Mammary epithelial cell (primary cell): ENCODE measurements at regions of chr2 and their contacts with region 1.

Region 1: DNA sequence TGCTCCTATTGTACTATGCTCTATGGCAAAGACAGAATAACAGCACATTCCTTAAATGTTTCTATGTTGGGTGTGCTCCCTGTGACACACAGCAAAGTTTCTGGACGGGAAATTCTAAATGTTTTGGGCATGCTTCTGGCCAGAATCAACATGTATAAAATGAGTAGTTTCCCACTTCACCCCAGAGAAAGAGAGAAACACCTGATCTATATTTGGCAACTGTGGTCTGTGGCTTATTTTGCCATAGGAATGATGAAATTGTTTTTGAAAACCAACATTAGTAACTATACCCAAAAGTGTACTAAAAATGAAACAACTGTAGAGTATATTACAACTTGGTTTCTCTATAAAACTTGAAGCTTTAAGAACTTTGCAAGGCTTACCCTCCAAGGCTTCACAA is 89.1 kb downstream of the RAD51AP2 start:
- DNase-seq: peak; percentile 95
- H3K4me3 ChIP-seq: peak overlapping the region in 1 of 3 experiments; percentile 15
- H3K27ac ChIP-seq: peak overlapping the region; percentile 82
- H3K4me1 ChIP-seq: peaks cover 27% of the 10 kb centered on the region
- H3K27me3 ChIP-seq: no peaks in the 10 kb centered on the region
- CTCF ChIP-seq: no peak

Region 2: DNA sequence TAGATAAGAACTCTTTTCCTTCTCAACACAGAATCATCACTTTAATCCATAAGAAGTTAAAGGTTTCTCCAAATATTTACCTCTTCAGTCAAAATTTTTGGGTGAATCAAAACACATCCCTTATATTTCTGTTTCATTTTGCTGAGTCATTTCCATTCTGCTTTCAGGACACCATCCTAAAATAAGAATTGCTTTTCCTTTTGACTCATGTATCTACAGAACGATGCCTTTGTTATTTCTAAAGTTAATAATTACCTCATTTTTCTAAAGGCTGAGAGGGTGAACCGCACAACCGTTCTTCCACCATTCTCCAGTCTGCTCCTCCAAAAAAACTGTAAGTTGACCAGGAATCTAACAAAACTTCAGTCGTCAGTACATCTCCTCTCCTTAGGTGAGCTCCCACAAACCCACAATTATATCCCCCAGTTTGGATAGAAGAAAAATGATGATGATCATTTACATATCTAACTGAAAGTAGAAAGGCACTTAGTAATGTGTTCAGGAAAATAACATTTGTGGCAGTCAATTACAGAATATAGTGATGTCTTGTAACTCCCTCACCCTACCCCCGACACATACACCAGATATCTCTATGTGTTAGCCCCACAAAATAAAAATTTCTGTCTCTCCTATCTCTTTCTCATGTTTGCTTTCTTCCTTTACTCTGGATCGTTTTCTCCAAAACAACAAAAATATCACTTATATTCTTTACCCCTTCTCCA is 73.4 kb before region 1 on chr2:
- CTCF ChIA-PET with region 1: no interaction called
- dilution Hi-C with region 1: no loop called
- in situ Hi-C with region 1: no loop called
- intact Hi-C with region 1: no loop called
- DNase-seq: no peak
- H3K4me3 ChIP-seq: no peak overlapping the region
- H3K27ac ChIP-seq: no peak overlapping the region
- H3K4me1 ChIP-seq: no peaks in the 10 kb centered on the region
- H3K27me3 ChIP-seq: no peaks in the 10 kb centered on the region
- CTCF ChIP-seq: no peak

Region 3: DNA sequence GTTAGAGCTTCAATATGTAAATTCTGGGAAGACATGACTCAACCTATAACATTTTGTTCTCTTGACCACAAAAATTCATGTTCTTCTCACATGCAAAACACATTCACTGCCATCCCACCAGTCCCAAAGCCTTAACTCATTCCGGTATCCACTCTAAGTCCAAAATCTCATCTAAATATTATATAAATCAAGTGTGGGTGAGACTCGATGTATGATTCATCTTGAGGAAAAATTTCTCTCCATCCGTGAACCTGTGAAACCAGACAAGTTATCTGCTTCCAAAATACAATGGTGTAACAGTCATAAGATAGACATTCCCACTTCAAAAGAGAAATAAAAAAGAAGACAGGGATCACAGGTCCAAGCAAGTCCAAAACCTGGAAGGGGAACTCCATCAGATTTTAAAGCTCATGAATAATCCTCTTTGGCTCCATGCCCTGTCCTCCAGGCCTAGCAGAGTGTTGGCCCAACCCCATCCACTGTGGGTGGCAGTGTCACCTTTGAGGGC is 12.2 kb before region 1 on chr2:
- CTCF ChIA-PET with region 1: no interaction called
- dilution Hi-C with region 1: no loop called
- in situ Hi-C with region 1: no loop called
- intact Hi-C with region 1: loop called (anchors 1 kb)
- DNase-seq: peak; percentile 99
- H3K4me3 ChIP-seq: no peak overlapping the region
- H3K27ac ChIP-seq: peak overlapping the region; percentile 89
- H3K4me1 ChIP-seq: peaks cover 21% of the 10 kb centered on the region
- H3K27me3 ChIP-seq: no peaks in the 10 kb centered on the region
- CTCF ChIP-seq: no peak

Region 4: GRCh38 chr2:17615728-17616351 is 186.7 kb after region 1 on chr2:
- CTCF ChIA-PET with region 1: no interaction called
- dilution Hi-C with region 1: no loop called
- in situ Hi-C with region 1: no loop called
- intact Hi-C with region 1: no loop called
- DNase-seq: peak; percentile 94
- H3K4me3 ChIP-seq: no peak overlapping the region
- H3K27ac ChIP-seq: peak overlapping the region; percentile 63
- H3K4me1 ChIP-seq: peaks cover 42% of the 10 kb centered on the region
- H3K27me3 ChIP-seq: no peaks in the 10 kb centered on the region
- CTCF ChIP-seq: no peak